WTC11 (cell line): ENCODE measurements at regions of chr20 and their contacts with region 1.

Region 1: DNA sequence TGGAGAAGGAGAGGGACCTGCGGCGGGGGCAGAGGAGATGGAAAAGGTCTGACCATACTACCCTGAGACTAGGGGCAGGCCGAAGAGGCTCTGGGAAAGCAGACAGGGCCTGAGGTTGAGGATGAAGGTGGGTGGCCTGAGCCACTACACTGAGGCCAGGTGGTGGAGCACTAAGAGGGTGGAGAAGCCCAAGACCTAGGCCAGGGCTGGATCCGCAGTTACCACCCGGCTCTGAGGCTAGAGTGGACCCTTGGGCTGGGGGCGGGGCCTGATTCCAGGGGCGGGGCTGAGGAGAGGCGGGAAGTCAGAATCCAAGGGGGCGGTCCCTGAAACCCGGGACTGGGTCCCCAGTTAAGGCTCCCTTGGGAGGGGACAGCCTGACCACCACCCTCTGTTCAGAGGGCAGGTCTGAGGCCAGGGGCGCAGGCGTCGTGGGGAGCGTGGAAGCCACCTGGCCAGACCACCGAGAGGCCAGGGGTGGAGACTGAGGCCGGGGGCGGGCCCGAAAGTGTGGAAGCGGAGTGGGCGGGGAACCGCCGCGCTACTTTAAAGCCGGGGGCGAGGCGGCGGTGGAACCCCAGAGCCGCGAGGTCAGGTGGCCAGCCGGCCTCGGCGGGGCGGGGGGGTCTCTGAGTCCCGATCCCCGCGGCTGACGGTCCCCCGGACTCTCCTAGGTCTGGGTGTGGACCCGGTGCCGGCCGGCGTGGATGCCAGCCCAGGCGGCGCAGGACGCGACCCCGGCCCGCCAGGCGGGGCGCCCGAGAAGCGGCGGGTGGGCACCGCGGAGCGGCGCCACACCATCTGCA is 8.2 kb downstream of the CCM2L start:
- DNase-seq: peak; percentile 96
- ATAC-seq: peak; percentile 85
- H3K4me3 Mint-ChIP-seq: peak overlapping the region; percentile 89
- H3K27ac Mint-ChIP-seq: peak overlapping the region; percentile 96
- H3K4me1 Mint-ChIP-seq: peaks cover 33% of the 10 kb centered on the region
- H3K27me3 Mint-ChIP-seq: peaks cover 16% of the 10 kb centered on the region
- CTCF ChIP-seq: peak; percentile 6; the same call in 1 of the 2 replicates

Region 2: DNA sequence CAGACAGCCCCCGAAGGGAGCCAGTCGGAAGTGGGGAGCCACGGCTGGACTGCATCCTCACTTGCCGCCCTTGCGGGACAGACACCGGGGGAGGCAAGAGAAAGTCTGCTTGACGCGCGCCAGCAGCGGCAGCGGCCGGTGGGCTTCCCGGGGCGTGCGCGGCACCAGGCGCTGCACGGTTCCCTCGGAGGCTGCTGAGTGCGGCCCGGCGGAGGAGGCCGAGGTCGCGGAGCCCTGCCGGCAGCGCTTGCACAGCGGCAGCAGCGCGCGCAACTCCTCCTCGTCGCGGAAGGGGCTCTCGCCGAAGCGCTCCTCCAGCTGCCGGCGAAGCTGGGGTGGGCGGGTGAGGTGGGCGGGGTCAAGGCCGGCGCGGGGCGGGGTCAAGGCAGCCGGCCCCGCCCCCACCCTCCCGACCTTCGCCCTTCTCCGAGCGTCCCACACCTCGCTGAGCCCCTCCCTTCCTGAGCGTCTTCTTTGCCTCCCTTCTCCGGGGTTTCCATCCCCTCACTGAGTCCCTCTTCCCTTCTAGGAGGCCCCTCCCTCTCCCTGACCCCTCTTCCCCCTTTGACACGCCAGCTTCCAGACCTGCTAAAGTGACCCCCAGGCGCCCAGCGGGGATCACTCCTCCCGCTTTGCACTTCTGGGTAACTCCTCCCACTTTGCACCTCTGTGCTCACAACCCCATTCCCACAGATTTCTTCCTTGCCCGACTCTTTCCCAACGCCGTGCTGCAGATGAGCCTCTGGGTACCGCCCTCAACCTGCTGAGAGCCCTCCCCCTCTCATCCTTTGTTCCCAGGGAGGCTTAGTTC is 156.9 kb before region 1 on chr20:
- CTCF ChIA-PET with region 1: interaction called, 10 read pairs
- POLR2A ChIA-PET with region 1: interaction called, 4 read pairs
- DNase-seq: peak; percentile 82
- ATAC-seq: peak; percentile 82
- H3K4me3 Mint-ChIP-seq: peak overlapping the region; percentile 91
- H3K27ac Mint-ChIP-seq: peak overlapping the region; percentile 93
- H3K4me1 Mint-ChIP-seq: peaks cover 15% of the 10 kb centered on the region
- H3K27me3 Mint-ChIP-seq: peaks cover 37% of the 10 kb centered on the region
- CTCF ChIP-seq: no peak

Region 3: DNA sequence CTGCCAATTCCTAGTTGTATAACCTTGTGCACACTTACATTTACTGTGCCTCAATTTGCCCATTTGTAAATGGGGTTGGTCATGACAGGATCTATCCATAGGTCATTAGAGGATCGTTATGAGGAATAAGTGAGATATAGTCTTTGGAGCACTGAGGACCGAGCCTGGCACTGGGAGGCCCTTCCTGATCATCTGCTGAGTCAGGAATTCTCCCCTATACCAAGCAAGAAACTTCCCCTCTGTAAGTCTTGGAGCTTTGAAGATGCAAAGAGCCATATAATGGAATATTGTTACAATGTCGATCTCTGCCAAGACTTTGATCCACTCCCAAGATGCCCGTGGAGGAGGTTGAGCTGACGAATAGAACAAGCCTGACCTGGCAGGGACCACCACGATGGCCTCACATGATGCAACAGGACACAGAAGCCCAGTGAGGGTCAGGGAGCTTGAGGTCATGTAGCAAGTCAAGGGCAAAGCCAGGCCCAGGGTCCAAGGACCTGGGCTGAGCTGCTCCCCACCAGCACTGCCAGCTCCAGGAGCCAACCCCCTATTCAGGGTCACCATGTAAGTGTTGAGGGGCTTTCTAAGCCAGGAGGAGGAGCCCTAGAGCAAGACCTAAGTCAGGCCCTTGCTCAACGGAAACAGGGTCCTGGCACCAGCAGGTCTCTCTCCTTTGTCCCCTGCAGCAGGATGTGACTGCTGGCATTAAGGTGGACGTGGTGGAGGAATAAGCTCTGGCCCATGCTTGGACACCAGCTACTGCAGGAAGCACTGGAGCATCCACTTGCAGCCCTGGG is 83.3 kb before region 1 on chr20:
- CTCF ChIA-PET with region 1: interaction called, 18 read pairs
- POLR2A ChIA-PET with region 1: no interaction called
- DNase-seq: peak; percentile 49
- ATAC-seq: peak; percentile 97
- H3K4me3 Mint-ChIP-seq: no peak overlapping the region
- H3K27ac Mint-ChIP-seq: no peak overlapping the region
- H3K4me1 Mint-ChIP-seq: peaks cover 8% of the 10 kb centered on the region
- H3K27me3 Mint-ChIP-seq: peaks cover 4% of the 10 kb centered on the region; the same call in 1 of the 2 replicates
- CTCF ChIP-seq: no peak; the same call in 1 of the 2 replicates

Region 4: DNA sequence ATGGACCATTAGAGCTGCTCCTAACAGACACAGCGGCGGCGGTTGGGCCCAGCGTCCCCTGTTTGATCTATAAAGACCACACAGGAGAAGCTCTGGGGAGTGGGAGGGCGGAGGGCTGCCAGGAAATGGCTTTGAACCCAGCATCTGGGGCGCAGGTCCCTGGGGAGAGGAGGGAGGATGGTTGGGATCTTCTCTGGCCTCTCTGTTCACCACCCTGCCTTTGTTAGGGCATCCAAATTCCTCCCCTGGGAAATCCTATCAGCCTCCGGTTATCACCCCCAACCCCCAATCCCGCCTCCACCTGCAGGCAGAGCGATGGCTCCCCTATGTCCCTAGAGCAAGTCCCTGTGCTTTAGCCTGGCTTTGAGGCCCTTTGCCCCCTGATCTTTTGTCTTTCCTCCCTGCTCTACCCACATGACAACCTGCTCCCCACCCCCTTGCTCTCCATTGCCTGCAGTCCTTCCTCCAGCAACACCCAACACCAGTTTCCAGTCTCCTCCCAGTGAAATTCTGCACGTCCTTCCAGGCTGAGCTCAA is 43.5 kb before region 1 on chr20:
- CTCF ChIA-PET with region 1: interaction called, 13 read pairs
- POLR2A ChIA-PET with region 1: no interaction called
- DNase-seq: peak; percentile 43
- ATAC-seq: peak; percentile 92
- H3K4me3 Mint-ChIP-seq: peak overlapping the region; percentile 30
- H3K27ac Mint-ChIP-seq: peak overlapping the region; percentile 82
- H3K4me1 Mint-ChIP-seq: peaks cover 20% of the 10 kb centered on the region
- H3K27me3 Mint-ChIP-seq: peaks cover 4% of the 10 kb centered on the region; the same call in 1 of the 2 replicates
- CTCF ChIP-seq: no peak

Region 5: GRCh38 chr20:32007787-32008616 is 10.5 kb before region 1 on chr20:
- CTCF ChIA-PET with region 1: interaction called, 48 read pairs
- POLR2A ChIA-PET with region 1: interaction called, 8 read pairs
- DNase-seq: peak; percentile 50
- ATAC-seq: peak; percentile 84
- H3K4me3 Mint-ChIP-seq: peak overlapping the region; percentile 3; the same call in 1 of the 2 replicates
- H3K27ac Mint-ChIP-seq: peak overlapping the region; percentile 79
- H3K4me1 Mint-ChIP-seq: peaks cover 53% of the 10 kb centered on the region
- H3K27me3 Mint-ChIP-seq: no peaks in the 10 kb centered on the region; the same call in 1 of the 2 replicates
- CTCF ChIP-seq: no peak

Region 6: GRCh38 chr20:32091888-32092346 is 73.4 kb after region 1 on chr20:
- CTCF ChIA-PET with region 1: interaction called, 20 read pairs
- POLR2A ChIA-PET with region 1: no interaction called
- DNase-seq: peak; percentile 91
- ATAC-seq: peak; percentile 62
- H3K4me3 Mint-ChIP-seq: no peak overlapping the region
- H3K27ac Mint-ChIP-seq: no peak overlapping the region
- H3K4me1 Mint-ChIP-seq: peaks cover 33% of the 10 kb centered on the region
- H3K27me3 Mint-ChIP-seq: peaks cover 6% of the 10 kb centered on the region; the same call in 1 of the 2 replicates
- CTCF ChIP-seq: peak; percentile 82

Region 7: DNA sequence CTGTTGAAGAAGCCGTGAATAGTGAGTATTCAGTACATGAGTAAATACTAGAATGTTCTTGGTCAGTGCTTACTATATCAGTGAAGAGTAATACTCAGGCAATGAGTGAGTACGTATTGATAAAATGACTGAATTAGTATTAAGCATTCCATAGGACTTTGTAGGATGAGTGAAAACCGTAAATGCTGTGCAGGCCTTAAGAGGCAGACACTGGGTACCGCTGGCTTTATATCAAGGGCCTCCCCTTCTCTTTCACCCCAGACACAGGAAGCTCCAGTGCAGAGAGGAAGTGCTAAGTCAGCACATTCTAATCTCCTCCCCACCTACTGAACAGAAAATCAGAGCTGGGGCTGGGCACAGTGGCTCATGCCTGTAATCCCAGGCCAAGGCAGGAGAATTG is 213.4 kb after region 1 on chr20:
- CTCF ChIA-PET with region 1: no interaction called
- POLR2A ChIA-PET with region 1: no interaction called
- DNase-seq: no peak
- ATAC-seq: no peak
- H3K4me3 Mint-ChIP-seq: no peak overlapping the region
- H3K27ac Mint-ChIP-seq: no peak overlapping the region
- H3K4me1 Mint-ChIP-seq: no peaks in the 10 kb centered on the region
- H3K27me3 Mint-ChIP-seq: no peaks in the 10 kb centered on the region
- CTCF ChIP-seq: no peak